ENCODE measurements at regions of chr19 and their contacts with region 1.

Region 1: GRCh38 chr19:39390755-39391592 is at the starts of genes MED29 and PAF1:
- DNase-seq: peak; percentile 76 to 99 (median 99)
- ATAC-seq: peak; percentile 95
- H3K4me3 ChIP-seq: peak within 1 kb of the TSS; percentile 84
- H3K4me3 Mint-ChIP-seq: peak within 1 kb of the TSS; percentile 89 to 99 (median 96)
- H3K27ac ChIP-seq: peak within 1 kb of the TSS; percentile 95
- H3K27ac Mint-ChIP-seq: peak within 1 kb of the TSS; percentile 95 to 100 (median 99)
- H3K4me1 ChIP-seq: peaks cover 16% of the 10 kb centered on the region in 2 donors
- H3K4me1 Mint-ChIP-seq: peaks cover 21 to 54% (median 38%) of the 10 kb centered on the region in 7 donors
- H3K27me3 ChIP-seq: no peaks in the 10 kb centered on the region
- H3K27me3 Mint-ChIP-seq: no peaks in the 10 kb centered on the region
- total RNA-seq, gene MED29: 44.2 to 57.2 (median 49.4) TPM
- total RNA-seq, gene PAF1: 42.8 to 104 (median 55.5) TPM

Region 2: GRCh38 chr19:38849860-38850435 is 541.0 kb before region 1 on chr19 and contains the start of gene HNRNPL:
- CTCF ChIA-PET with region 1: no interaction called
- POLR2A ChIA-PET with region 1: no interaction called
- intact Hi-C with region 1: loop called in 1 of 2 experiments (anchors 2 kb)
- DNase-seq: peak; percentile 99 to 100 (median 100)
- ATAC-seq: peak; percentile 78
- H3K4me3 ChIP-seq: peak within 1 kb of the TSS; percentile 81
- H3K4me3 Mint-ChIP-seq: peak within 1 kb of the TSS; percentile 88 to 99 (median 96)
- H3K27ac ChIP-seq: peak within 1 kb of the TSS; percentile 96
- H3K27ac Mint-ChIP-seq: peak within 1 kb of the TSS; percentile 94 to 100 (median 99)
- H3K4me1 ChIP-seq: peaks cover 24 to 41% of the 10 kb centered on the region in 2 donors
- H3K4me1 Mint-ChIP-seq: peaks cover 30 to 67% (median 50%) of the 10 kb centered on the region in 7 donors
- H3K27me3 ChIP-seq: no peaks in the 10 kb centered on the region
- H3K27me3 Mint-ChIP-seq: peaks cover 0 to 5% (median 0%) of the 10 kb centered on the region in 5 donors
- total RNA-seq, gene HNRNPL: 339 to 539 (median 505) TPM

Region 3: GRCh38 chr19:39212375-39212742 is 178.6 kb before region 1 on chr19:
- CTCF ChIA-PET with region 1: no interaction called
- POLR2A ChIA-PET with region 1: no interaction called
- intact Hi-C with region 1: loop called in 1 of 2 experiments (anchors 1 kb)
- DNase-seq: peak in 8 of 9 donors; percentile 24 to 58 (median 46)
- ATAC-seq: peak; percentile 80
- H3K4me3 ChIP-seq: no peak overlapping the region
- H3K4me3 Mint-ChIP-seq: no peak overlapping the region
- H3K27ac ChIP-seq: no peak overlapping the region
- H3K27ac Mint-ChIP-seq: no peak overlapping the region
- H3K4me1 ChIP-seq: no peaks in the 10 kb centered on the region
- H3K4me1 Mint-ChIP-seq: no peaks in the 10 kb centered on the region
- H3K27me3 ChIP-seq: no peaks in the 10 kb centered on the region
- H3K27me3 Mint-ChIP-seq: peaks cover 0 to 13% (median 5%) of the 10 kb centered on the region in 5 donors

Region 4: GRCh38 chr19:39237200-39238184 is 153.5 kb before region 1 on chr19:
- CTCF ChIA-PET with region 1: no interaction called
- POLR2A ChIA-PET with region 1: no interaction called
- intact Hi-C with region 1: no loop called
- DNase-seq: peak in 6 of 9 donors; percentile 12 to 49 (median 20)
- ATAC-seq: peak; percentile 72
- H3K4me3 ChIP-seq: peak overlapping the region; percentile 50
- H3K4me3 Mint-ChIP-seq: peak overlapping the region; percentile 59 to 84 (median 78)
- H3K27ac ChIP-seq: peak overlapping the region; percentile 68
- H3K27ac Mint-ChIP-seq: peak overlapping the region; percentile 73 to 95 (median 89)
- H3K4me1 ChIP-seq: peaks cover 16 to 18% of the 10 kb centered on the region in 2 donors
- H3K4me1 Mint-ChIP-seq: peaks cover 14 to 34% (median 23%) of the 10 kb centered on the region in 7 donors
- H3K27me3 ChIP-seq: no peaks in the 10 kb centered on the region
- H3K27me3 Mint-ChIP-seq: peaks cover 0 to 3% (median 0%) of the 10 kb centered on the region in 5 donors

Region 5: DNA sequence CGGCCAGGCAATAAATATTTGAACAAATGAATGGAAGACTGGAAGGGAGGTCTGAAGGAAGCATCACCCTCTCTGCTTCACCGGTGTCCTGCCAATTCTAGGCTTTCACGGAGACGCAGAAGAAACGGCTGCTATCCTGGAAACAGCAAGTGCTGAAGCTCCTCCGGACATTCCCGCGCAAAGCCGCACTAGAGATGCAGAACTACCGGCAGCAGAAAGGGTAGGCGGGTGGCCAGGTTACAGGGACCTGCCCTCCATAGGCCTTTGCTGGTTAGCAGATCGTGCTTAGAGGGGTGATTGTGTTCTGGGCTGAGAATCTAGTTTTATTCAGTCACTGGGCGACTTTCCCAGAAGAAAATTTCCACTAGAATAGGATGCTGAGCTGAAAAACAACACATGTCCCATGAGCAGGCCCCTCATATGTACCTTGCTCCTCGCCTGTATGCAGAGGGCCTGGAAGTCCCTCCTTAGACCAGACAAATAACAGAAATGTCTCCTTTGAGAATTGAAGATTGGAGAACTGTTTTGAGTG is 11.0 kb before region 1 on chr19:
- CTCF ChIA-PET with region 1: no interaction called
- POLR2A ChIA-PET with region 1: no interaction called
- intact Hi-C with region 1: no loop called
- DNase-seq: no peak
- ATAC-seq: no peak
- H3K4me3 ChIP-seq: no peak overlapping the region
- H3K4me3 Mint-ChIP-seq: no peak overlapping the region
- H3K27ac ChIP-seq: no peak overlapping the region
- H3K27ac Mint-ChIP-seq: peak overlapping the region in 2 of 9 donors; percentile 19 to 52
- H3K4me1 ChIP-seq: no peaks in the 10 kb centered on the region
- H3K4me1 Mint-ChIP-seq: no peaks in the 10 kb centered on the region
- H3K27me3 ChIP-seq: no peaks in the 10 kb centered on the region
- H3K27me3 Mint-ChIP-seq: no peaks in the 10 kb centered on the region

Region 6: DNA sequence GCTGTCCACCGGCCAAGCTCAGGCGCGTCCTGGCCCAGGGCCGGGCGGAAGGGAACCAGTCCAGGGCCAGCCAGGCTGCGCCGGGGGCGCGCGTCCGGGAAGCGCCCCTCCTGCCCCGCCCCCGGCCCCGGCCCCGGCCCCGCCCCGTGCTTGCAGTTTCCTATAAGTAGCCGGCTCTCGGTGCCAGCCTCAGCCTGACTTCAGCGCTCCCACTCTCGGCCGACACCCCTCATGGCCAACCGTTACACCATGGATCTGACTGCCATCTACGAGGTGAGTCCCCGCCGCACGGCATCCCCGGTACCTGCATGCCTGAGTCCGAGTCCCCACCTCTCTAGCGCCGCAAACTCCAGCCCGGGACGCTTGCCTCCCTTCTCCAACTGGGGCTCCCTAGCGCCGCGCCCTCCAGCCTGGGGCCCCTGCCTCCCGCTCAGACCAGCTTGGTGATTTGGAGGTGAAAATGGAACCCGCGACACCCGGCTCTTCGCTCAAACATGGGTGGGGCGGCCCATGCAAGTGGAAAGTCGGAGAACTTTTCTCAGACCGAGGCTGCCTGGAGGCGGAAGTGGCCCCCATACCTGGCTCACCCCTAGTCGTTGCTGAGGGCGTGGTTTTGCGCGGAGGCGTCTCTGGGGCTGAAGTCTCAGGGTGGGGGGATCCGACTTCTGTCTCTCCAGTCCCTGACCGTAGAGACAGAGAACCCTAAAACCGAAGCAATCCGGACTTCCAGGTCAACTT is 15.9 kb after region 1 on chr19 and contains the start of gene ZFP36:
- CTCF ChIA-PET with region 1: interaction called, 121 read pairs
- POLR2A ChIA-PET with region 1: interaction called, 250 read pairs
- intact Hi-C with region 1: loop called (anchors 1 kb)
- DNase-seq: peak; percentile 82 to 91 (median 86)
- ATAC-seq: peak; percentile 51
- H3K4me3 ChIP-seq: peak within 1 kb of the TSS; percentile 100
- H3K4me3 Mint-ChIP-seq: peak within 1 kb of the TSS; percentile 89 to 99 (median 94)
- H3K27ac ChIP-seq: peak within 1 kb of the TSS; percentile 100
- H3K27ac Mint-ChIP-seq: peak within 1 kb of the TSS; percentile 96 to 99 (median 99)
- H3K4me1 ChIP-seq: peaks cover 41 to 52% of the 10 kb centered on the region in 2 donors
- H3K4me1 Mint-ChIP-seq: peaks cover 28 to 67% (median 48%) of the 10 kb centered on the region in 7 donors
- H3K27me3 ChIP-seq: no peaks in the 10 kb centered on the region
- H3K27me3 Mint-ChIP-seq: peaks cover 0 to 3% (median 0%) of the 10 kb centered on the region in 5 donors
- total RNA-seq, gene ZFP36: 72.1 to 1,250 (median 187) TPM

Region 7: GRCh38 chr19:39426170-39426569 is 35.2 kb after region 1 on chr19:
- CTCF ChIA-PET with region 1: no interaction called
- POLR2A ChIA-PET with region 1: no interaction called
- intact Hi-C with region 1: no loop called
- DNase-seq: no peak
- ATAC-seq: no peak
- H3K4me3 ChIP-seq: no peak overlapping the region
- H3K4me3 Mint-ChIP-seq: no peak overlapping the region
- H3K27ac ChIP-seq: no peak overlapping the region
- H3K27ac Mint-ChIP-seq: peak overlapping the region in 3 of 9 donors; percentile 6 to 8 (median 7)
- H3K4me1 ChIP-seq: peaks cover 0 to 7% of the 10 kb centered on the region in 2 donors
- H3K4me1 Mint-ChIP-seq: peaks cover 0 to 9% (median 3%) of the 10 kb centered on the region in 7 donors
- H3K27me3 ChIP-seq: no peaks in the 10 kb centered on the region
- H3K27me3 Mint-ChIP-seq: no peaks in the 10 kb centered on the region

Region 8: GRCh38 chr19:39445265-39446111 is 54.5 kb after region 1 on chr19 and contains the start of gene SUPT5H:
- CTCF ChIA-PET with region 1: interaction called, 3 read pairs
- POLR2A ChIA-PET with region 1: interaction called, 10 read pairs
- intact Hi-C with region 1: loop called (anchors 1 kb)
- DNase-seq: peak; percentile 84 to 99 (median 97)
- ATAC-seq: peak; percentile 96
- H3K4me3 ChIP-seq: peak within 1 kb of the TSS; percentile 77
- H3K4me3 Mint-ChIP-seq: peak within 1 kb of the TSS; percentile 91 to 100 (median 97)
- H3K27ac ChIP-seq: peak within 1 kb of the TSS; percentile 98
- H3K27ac Mint-ChIP-seq: peak within 1 kb of the TSS; percentile 95 to 100 (median 99)
- H3K4me1 ChIP-seq: peaks cover 35 to 47% of the 10 kb centered on the region in 2 donors
- H3K4me1 Mint-ChIP-seq: peaks cover 38 to 61% (median 48%) of the 10 kb centered on the region in 7 donors
- H3K27me3 ChIP-seq: no peaks in the 10 kb centered on the region
- H3K27me3 Mint-ChIP-seq: no peaks in the 10 kb centered on the region
- total RNA-seq, gene SUPT5H: 180 to 247 (median 203) TPM

Region 9: DNA sequence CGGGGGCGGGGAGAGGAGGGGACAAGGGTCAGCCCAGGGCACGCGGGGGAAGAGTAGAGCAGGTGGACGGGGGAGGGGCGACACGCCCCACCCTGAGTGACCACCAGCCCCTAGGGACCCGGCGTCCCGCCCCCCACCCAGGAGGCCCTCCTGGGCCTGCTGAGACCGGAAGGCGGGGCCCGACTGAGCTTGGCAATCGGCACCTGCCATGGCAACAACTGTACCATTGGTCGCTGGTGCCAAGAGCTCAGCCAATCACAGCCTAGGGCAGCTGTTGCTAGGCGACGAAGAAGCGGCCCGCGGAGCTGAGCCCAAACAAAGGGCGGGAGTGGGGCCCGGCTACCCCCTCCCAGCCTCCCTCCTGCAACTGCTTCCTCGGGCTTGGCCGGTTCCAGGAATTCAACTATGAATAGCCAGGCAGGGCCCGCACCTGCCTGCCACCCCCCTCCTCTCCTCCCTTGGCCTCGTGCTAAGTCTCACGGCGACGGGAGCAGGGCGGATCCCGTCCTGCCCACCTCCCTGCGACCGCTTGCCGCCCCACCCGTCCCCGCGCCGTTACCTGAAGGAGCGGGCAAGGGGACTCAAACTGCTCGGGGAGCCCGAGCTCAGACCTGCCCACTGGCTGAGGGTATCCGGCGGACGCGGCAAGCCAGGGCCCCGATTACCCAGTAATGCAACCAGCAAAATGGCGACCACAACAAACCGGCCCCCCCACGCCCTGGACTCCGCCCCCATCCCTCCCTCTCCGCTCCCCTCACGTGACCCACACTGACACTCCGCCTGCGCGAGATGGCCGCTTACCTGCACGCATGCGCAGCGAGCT is 442.7 kb after region 1 on chr19 and contains the start of gene DYRK1B:
- CTCF ChIA-PET with region 1: no interaction called
- POLR2A ChIA-PET with region 1: no interaction called
- intact Hi-C with region 1: loop called in 1 of 2 experiments (anchors 5 kb)
- DNase-seq: peak; percentile 90 to 99 (median 98)
- ATAC-seq: peak; percentile 92
- H3K4me3 ChIP-seq: peak within 1 kb of the TSS; percentile 100
- H3K4me3 Mint-ChIP-seq: peak within 1 kb of the TSS; percentile 60 to 88 (median 81)
- H3K27ac ChIP-seq: peak within 1 kb of the TSS; percentile 96
- H3K27ac Mint-ChIP-seq: peak within 1 kb of the TSS; percentile 85 to 96 (median 92)
- H3K4me1 ChIP-seq: peaks cover 17 to 23% of the 10 kb centered on the region in 2 donors
- H3K4me1 Mint-ChIP-seq: peaks cover 19 to 37% (median 27%) of the 10 kb centered on the region in 7 donors
- H3K27me3 ChIP-seq: no peaks in the 10 kb centered on the region
- H3K27me3 Mint-ChIP-seq: no peaks in the 10 kb centered on the region
- total RNA-seq, gene DYRK1B: 12.3 to 38.9 (median 23.5) TPM